Activated T-helper 2 cell treated with anti-CD3 and anti-CD28 coated beads, Interferon-gamma antibody, Interleukin-2, Interleukin-4, amounts not matched to agents 10 μg/mL and 5 μg/mL and 100 μg/mL, durations not matched to agents 14 hours and 24 hours and 36 hours (primary cell): ENCODE measurements at regions of chr1 and their contacts with region 1.

Region 1: DNA sequence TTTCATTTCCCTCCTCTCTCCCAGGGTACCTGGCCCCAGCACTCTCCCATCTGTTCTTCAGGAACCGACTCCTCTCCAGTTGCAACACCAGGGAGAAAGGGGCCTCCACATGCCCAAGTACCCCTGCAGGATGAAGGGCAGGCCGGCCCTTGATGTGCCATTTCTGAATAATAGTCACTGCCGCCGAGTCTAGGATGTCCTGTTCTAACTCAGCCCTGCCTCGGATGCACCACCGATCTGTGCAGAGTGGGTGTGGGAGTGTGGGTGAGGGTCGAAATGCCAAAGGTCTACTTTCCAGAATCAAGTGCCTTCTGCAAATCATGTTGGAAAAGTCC is 25.4 kb upstream of the SPSB1 start:
- DNase-seq: no peak
- H3K4me3 Mint-ChIP-seq: no peak overlapping the region
- H3K27ac Mint-ChIP-seq: no peak overlapping the region
- H3K4me1 Mint-ChIP-seq: peaks cover 5% of the 10 kb centered on the region
- H3K27me3 Mint-ChIP-seq: no peaks in the 10 kb centered on the region

Region 2: DNA sequence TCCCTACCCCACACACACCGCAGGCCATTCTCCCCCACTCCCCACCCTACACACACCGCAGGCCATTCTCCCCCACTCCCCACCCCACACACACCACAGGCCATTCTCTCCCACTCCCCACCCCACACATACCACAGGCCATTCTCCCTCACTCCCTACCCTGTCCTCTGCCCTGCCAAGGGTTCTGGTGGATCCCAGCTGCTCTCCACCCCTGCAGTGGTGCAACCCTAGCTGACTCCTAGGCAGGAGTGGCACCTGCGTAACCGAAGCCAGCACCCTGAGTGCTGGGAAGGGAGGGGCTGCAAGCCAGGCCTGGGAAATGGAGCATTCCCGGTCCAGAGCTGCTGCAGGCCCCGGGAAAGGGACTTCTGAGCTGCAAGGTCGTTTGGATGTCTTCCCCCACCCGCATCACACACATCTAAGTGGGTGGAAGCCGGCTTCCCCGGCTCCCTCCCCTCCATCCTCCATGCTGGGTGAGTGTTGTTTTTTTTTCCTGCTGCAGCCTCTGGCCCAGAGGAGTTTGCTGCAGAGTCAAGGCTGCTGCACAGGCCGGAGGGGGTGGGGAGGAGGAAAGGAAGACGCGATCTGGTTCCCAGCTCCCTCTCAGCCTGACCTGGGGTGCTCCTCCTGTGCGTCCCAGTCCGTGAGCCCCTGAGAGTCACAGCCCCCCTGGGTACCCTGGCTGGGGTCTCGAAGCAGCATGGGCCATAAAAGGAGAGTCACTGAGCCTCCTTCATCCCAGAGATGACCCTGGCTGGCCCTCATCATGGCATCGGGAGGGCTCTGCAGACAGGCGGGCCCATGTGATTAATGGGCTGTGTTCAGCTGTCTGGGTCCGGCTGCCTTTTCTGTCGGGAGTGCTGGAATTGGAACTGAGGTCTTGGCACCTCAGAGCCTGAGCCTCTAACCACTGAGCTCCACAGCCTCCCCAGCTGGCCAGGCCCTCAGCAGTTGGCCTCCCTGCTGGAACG is 16.6 kb before region 1 on chr1:
- intact Hi-C with region 1: no loop called
- DNase-seq: no peak
- H3K4me3 Mint-ChIP-seq: no peak overlapping the region
- H3K27ac Mint-ChIP-seq: no peak overlapping the region
- H3K4me1 Mint-ChIP-seq: peaks cover 18% of the 10 kb centered on the region
- H3K27me3 Mint-ChIP-seq: no peaks in the 10 kb centered on the region

Region 3: GRCh38 chr1:9292361-9293240 is 25.3 kb after region 1 on chr1 and contains the start of gene SPSB1:
- intact Hi-C with region 1: no loop called
- DNase-seq: peak; percentile 55
- H3K4me3 Mint-ChIP-seq: peak within 1 kb of the TSS; percentile 27
- H3K27ac Mint-ChIP-seq: no peak within 1 kb of the TSS
- H3K4me1 Mint-ChIP-seq: peaks cover 29% of the 10 kb centered on the region
- H3K27me3 Mint-ChIP-seq: no peaks in the 10 kb centered on the region
- total RNA-seq, gene SPSB1: 7.1 and 7.5 TPM in 2 replicates

Region 4: GRCh38 chr1:9455487-9456234 is 188.3 kb after region 1 on chr1:
- intact Hi-C with region 1: loop called (anchors 1 kb)
- DNase-seq: peak; percentile 37
- H3K4me3 Mint-ChIP-seq: no peak overlapping the region
- H3K27ac Mint-ChIP-seq: no peak overlapping the region
- H3K4me1 Mint-ChIP-seq: no peaks in the 10 kb centered on the region
- H3K27me3 Mint-ChIP-seq: peaks cover 9% of the 10 kb centered on the region